ENCODE measurements at regions of chr6 and their contacts with region 1.

Region 1: GRCh38 chr6:127484212-127484858 is 25.1 kb upstream of the KIAA0408 start:
- DNase-seq: no peak
- H3K4me3 ChIP-seq: no peak overlapping the region
- H3K4me3 Mint-ChIP-seq: no peak overlapping the region
- H3K27ac Mint-ChIP-seq: no peak overlapping the region
- H3K4me1 ChIP-seq: peaks cover 9% of the 10 kb centered on the region
- H3K4me1 Mint-ChIP-seq: no peaks in the 10 kb centered on the region
- H3K27me3 ChIP-seq: no peaks in the 10 kb centered on the region
- H3K27me3 Mint-ChIP-seq: peaks cover 5% of the 10 kb centered on the region
- CTCF ChIP-seq: no peak

Region 2: GRCh38 chr6:126581316-126581715 is 903.0 kb before region 1 on chr6:
- CTCF ChIA-PET with region 1: no interaction called
- POLR2A ChIA-PET with region 1: no interaction called
- intact Hi-C with region 1: loop called (anchors 10 kb)
- DNase-seq: no peak
- H3K4me3 ChIP-seq: no peak overlapping the region
- H3K4me3 Mint-ChIP-seq: no peak overlapping the region
- H3K27ac Mint-ChIP-seq: no peak overlapping the region
- H3K4me1 ChIP-seq: no peaks in the 10 kb centered on the region
- H3K4me1 Mint-ChIP-seq: no peaks in the 10 kb centered on the region
- H3K27me3 ChIP-seq: no peaks in the 10 kb centered on the region
- H3K27me3 Mint-ChIP-seq: peaks cover 3% of the 10 kb centered on the region
- CTCF ChIP-seq: no peak

Region 3: DNA sequence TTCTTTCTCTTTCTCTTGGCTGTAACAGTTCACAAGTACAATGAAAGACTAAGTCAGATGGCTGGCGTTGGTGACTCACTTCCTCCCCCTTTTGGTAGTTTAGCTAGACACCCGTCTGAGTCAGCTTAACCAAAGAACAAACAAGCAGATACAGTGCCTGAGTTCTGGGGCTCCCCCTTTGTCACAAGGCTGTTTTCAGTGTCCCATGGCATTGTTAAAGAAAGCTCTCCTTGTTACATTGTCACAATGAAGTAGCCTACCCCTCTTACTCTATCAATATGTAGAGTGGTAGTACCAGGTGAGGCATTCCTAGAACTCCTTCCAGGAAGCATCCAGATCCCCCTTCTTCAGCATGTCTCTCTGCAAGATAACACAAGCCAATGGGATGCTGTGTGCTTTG is 63.8 kb before region 1 on chr6:
- CTCF ChIA-PET with region 1: no interaction called
- POLR2A ChIA-PET with region 1: no interaction called
- intact Hi-C with region 1: no loop called
- DNase-seq: peak; percentile 49 to 62
- H3K4me3 ChIP-seq: no peak overlapping the region
- H3K4me3 Mint-ChIP-seq: no peak overlapping the region
- H3K27ac Mint-ChIP-seq: no peak overlapping the region
- H3K4me1 ChIP-seq: no peaks in the 10 kb centered on the region
- H3K4me1 Mint-ChIP-seq: no peaks in the 10 kb centered on the region
- H3K27me3 ChIP-seq: no peaks in the 10 kb centered on the region
- H3K27me3 Mint-ChIP-seq: no peaks in the 10 kb centered on the region
- CTCF ChIP-seq: peak; percentile 41 to 66

Region 4: GRCh38 chr6:127496471-127496870 is 12.1 kb after region 1 on chr6:
- CTCF ChIA-PET with region 1: no interaction called
- POLR2A ChIA-PET with region 1: no interaction called
- intact Hi-C with region 1: no loop called
- DNase-seq: no peak
- H3K4me3 ChIP-seq: no peak overlapping the region
- H3K4me3 Mint-ChIP-seq: no peak overlapping the region
- H3K27ac Mint-ChIP-seq: no peak overlapping the region
- H3K4me1 ChIP-seq: no peaks in the 10 kb centered on the region
- H3K4me1 Mint-ChIP-seq: no peaks in the 10 kb centered on the region
- H3K27me3 ChIP-seq: no peaks in the 10 kb centered on the region
- H3K27me3 Mint-ChIP-seq: peaks cover 13% of the 10 kb centered on the region
- CTCF ChIP-seq: no peak